Ovary (tissue), 10 donors: ENCODE measurements at regions of chr10 and their contacts with region 1.

Region 1: GRCh38 chr10:61153771-61154170 is 209.8 kb upstream of the RHOBTB1 start:
- DNase-seq: no peak
- H3K4me3 ChIP-seq: no peak overlapping the region
- H3K27ac ChIP-seq: no peak overlapping the region
- H3K4me1 ChIP-seq: no peaks in the 10 kb centered on the region
- H3K27me3 ChIP-seq: no peaks in the 10 kb centered on the region
- CTCF ChIP-seq: no peak
- EP300 ChIP-seq: no peak
- POLR2A ChIP-seq: no peak

Region 2: GRCh38 chr10:61081301-61081700 is 72.5 kb before region 1 on chr10:
- intact Hi-C with region 1: no loop called
- DNase-seq: peak in 4 of 5 donors; percentile 16 to 43 (median 20)
- H3K4me3 ChIP-seq: no peak overlapping the region
- H3K27ac ChIP-seq: no peak overlapping the region
- H3K4me1 ChIP-seq: peaks cover 5% of the 10 kb centered on the region
- H3K27me3 ChIP-seq: no peaks in the 10 kb centered on the region
- CTCF ChIP-seq: no peak
- EP300 ChIP-seq: no peak
- POLR2A ChIP-seq: no peak

Region 3: DNA sequence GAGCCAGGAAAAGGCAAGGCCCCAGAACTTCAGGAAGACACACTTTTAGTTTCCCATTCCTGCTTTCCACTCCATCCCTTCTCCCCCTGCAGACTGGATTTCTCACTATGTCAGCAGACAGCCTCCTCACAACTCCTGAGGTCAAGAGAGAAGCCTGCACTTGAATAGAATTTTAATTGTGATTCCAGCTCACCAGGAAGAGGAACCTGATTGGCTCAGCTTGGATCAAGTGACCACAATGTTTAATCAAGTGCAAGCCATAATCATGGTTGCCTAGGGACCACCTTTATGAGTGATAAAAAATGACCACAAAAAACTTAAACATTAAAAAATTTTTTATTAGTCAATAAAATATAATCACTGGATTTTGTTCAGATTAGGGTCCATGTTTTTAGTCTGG is 34.9 kb after region 1 on chr10:
- intact Hi-C with region 1: loop called in 1 of 4 experiments (anchors 1 kb)
- DNase-seq: no peak
- H3K4me3 ChIP-seq: no peak overlapping the region
- H3K27ac ChIP-seq: no peak overlapping the region
- H3K4me1 ChIP-seq: no peaks in the 10 kb centered on the region
- H3K27me3 ChIP-seq: no peaks in the 10 kb centered on the region
- CTCF ChIP-seq: no peak
- EP300 ChIP-seq: no peak
- POLR2A ChIP-seq: no peak